Dendritic cell treated with granulocyte-macrophage colony-stimulating factor and Interleukin-4, amounts not matched to agents 40 ng/mL and 50 ng/mL, for 4 days (primary cell): ENCODE measurements at regions of chr13 and their contacts with region 1.

Region 1: GRCh38 chr13:38349390-38350113 is at the start of gene UFM1:
- H3K4me3 Mint-ChIP-seq: peak within 1 kb of the TSS; percentile 92
- H3K27ac Mint-ChIP-seq: peak within 1 kb of the TSS; percentile 92
- H3K4me1 Mint-ChIP-seq: peaks cover 25% of the 10 kb centered on the region
- H3K27me3 Mint-ChIP-seq: no peaks in the 10 kb centered on the region

Region 2: GRCh38 chr13:37058910-37059847 is 1290.4 kb before region 1 on chr13 and contains the start of gene SUPT20H:
- intact Hi-C with region 1: loop called (anchors 5 kb)
- H3K4me3 Mint-ChIP-seq: peak within 1 kb of the TSS; percentile 93
- H3K27ac Mint-ChIP-seq: peak within 1 kb of the TSS; percentile 94
- H3K4me1 Mint-ChIP-seq: peaks cover 32% of the 10 kb centered on the region
- H3K27me3 Mint-ChIP-seq: peaks cover 2% of the 10 kb centered on the region

Region 3: GRCh38 chr13:38090913-38091312 is 258.6 kb before region 1 on chr13:
- intact Hi-C with region 1: no loop called
- H3K4me3 Mint-ChIP-seq: no peak overlapping the region
- H3K27ac Mint-ChIP-seq: no peak overlapping the region
- H3K4me1 Mint-ChIP-seq: no peaks in the 10 kb centered on the region
- H3K27me3 Mint-ChIP-seq: no peaks in the 10 kb centered on the region

Region 4: DNA sequence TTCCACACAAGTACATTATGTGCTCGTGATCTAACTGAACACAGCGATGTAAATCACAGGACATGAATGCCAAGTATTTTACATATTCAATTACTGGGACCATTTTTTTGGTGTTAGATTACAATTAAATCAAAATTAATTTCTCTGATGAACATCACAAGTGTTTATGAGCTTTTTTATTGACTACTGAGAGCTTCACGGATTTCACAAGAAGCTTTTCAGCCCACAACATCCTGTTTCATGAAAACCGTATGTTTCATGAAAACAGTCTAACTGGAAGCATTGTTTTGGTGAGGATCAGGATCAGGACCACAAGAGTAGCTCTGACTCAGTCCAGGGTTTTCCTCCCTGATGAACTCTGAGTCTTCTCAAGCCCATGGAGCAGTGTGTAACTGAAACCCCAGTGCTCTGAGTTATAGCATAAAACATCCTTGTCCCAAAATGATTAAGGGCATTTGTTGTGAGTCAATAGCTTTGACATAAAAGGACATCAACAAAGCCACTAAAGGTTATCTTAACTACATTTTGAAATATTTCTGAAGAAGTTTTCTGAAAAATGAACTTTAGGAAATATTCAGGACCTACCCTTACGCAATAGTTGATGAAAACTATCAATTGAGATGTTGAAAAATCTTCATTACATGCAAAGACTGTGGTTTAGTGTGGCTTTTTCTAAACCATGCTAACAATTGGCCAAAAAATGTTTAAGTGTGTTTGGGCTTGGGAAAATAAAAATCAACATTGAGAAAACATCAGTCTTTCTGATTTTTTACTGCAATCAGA is 49.4 kb after region 1 on chr13:
- intact Hi-C with region 1: loop called (anchors 5 kb)
- H3K4me3 Mint-ChIP-seq: peak overlapping the region; percentile 61
- H3K27ac Mint-ChIP-seq: peak overlapping the region; percentile 75
- H3K4me1 Mint-ChIP-seq: peaks cover 4% of the 10 kb centered on the region
- H3K27me3 Mint-ChIP-seq: no peaks in the 10 kb centered on the region

Region 5: GRCh38 chr13:39037880-39038568 is 688.5 kb after region 1 on chr13 and contains the starts of genes NHLRC3 and PROSER1:
- intact Hi-C with region 1: loop called (anchors 10 kb)
- H3K4me3 Mint-ChIP-seq: peak within 1 kb of the TSS; percentile 90
- H3K27ac Mint-ChIP-seq: peak within 1 kb of the TSS; percentile 99
- H3K4me1 Mint-ChIP-seq: peaks cover 46% of the 10 kb centered on the region
- H3K27me3 Mint-ChIP-seq: no peaks in the 10 kb centered on the region